ENCODE measurements at regions of chr17 and their contacts with region 1.

Region 1: DNA sequence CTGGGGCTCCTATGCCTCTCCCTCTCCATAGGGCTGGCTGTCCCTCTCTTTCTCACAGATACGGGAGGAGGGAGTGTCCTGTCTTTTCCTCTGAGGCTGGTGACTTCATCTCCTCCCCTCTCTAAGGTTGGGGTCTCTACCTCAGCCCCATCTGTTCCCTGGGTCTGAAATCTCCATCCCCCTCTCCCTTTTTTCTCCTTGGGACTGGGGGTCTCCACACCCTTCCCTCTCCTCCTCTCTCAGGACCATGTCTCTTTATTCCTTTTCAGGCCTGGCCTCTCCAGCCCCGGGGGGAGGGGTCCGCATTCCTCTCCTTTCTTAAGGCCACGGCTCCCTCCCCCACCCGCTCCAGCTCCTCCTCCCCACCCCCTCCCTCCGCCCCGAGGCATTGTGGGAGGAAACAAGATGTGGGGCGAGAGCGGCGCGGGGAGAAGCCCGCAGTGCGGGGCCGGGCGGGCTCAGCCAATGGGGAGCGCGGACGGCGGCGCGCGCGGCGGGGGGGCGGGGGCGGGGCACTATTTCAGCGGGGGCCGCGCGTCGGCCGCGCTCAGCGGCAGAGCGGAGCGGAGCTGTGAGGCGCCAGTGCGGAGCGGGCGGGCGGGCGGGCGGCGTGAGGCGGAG is at the start of gene DYNLL2:
- DNase-seq: peak; percentile 93 to 96 (median 95)
- H3K4me3 ChIP-seq: peak within 1 kb of the TSS; percentile 72 to 100 (median 86)
- H3K27ac ChIP-seq: peak within 1 kb of the TSS; percentile 88 to 99 (median 95)
- H3K4me1 ChIP-seq: peaks cover 20 to 38% of the 10 kb centered on the region in 2 donors
- H3K27me3 ChIP-seq: no peaks in the 10 kb centered on the region
- CTCF ChIP-seq: no peak
- POLR2A ChIP-seq: no peak
- total RNA-seq, gene DYNLL2: 18.5 to 207 (median 46.6) TPM

Region 2: GRCh38 chr17:58006924-58007780 is 75.8 kb before region 1 on chr17 and contains the start of gene SRSF1:
- intact Hi-C with region 1: loop called in 1 of 2 experiments (anchors 5 kb)
- DNase-seq: peak; percentile 97 to 98 (median 97)
- H3K4me3 ChIP-seq: peak within 1 kb of the TSS; percentile 30 to 90 (median 83)
- H3K27ac ChIP-seq: peak within 1 kb of the TSS; percentile 89 to 99 (median 98)
- H3K4me1 ChIP-seq: peaks cover 12 to 47% of the 10 kb centered on the region in 2 donors
- H3K27me3 ChIP-seq: no peaks in the 10 kb centered on the region
- CTCF ChIP-seq: no peak
- POLR2A ChIP-seq: peak; percentile 84 to 95
- total RNA-seq, gene SRSF1: 131 to 236 (median 206) TPM

Measured in adrenal gland (tissue), 19 donors.